ENCODE measurements at regions of chr15 and their contacts with region 1.

Region 1: DNA sequence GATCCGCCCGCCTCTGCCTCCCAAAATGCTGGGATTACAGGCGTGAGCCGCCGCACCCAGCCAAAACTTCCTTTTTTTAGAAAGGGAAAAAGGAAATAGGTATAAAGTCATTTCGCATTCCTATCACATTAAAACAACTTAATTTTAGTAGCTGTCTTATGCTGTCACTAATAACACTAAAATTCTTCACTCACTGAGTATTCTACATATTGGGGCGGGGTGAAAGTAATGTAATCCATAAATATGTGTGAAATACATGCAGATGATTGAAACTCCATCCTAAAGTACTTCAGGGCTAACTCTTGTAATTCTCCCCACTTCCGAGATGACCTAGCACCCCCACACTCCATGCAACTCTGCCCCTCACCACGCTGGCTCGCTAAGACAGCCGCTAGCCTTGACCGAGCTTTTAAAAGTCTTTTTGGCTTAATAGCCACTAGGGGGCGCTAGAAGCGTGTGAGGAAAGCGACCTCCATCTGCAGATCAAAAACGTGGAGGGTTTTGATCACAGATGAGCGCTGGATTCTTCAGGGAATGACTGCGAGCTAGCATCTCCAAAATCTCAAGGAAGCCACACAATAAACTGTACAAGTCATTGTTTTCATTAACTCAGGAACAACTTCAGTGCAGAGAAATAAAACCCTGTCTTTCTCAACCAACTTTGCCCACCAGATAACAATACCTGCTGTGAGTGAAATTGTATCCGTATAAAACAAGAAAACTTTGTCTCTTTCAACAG is 129.3 kb upstream of the IGF1R start:
- DNase-seq: peak; percentile 79
- H3K4me3 ChIP-seq: peak overlapping the region in 1 of 2 experiments; percentile 49; a peak in 2 of 4 replicates
- H3K27ac ChIP-seq: no peak overlapping the region
- H3K4me1 ChIP-seq: no peaks in the 10 kb centered on the region
- H3K27me3 ChIP-seq: no peaks in the 10 kb centered on the region
- CTCF ChIP-seq: peak; percentile 85
- EP300 ChIP-seq: no peak
- RAD21 ChIP-seq: peak; percentile 86

Region 2: GRCh38 chr15:98321896-98322295 is 197.1 kb before region 1 on chr15:
- CTCF ChIA-PET with region 1: no interaction called
- POLR2A ChIA-PET with region 1: no interaction called
- DNase-seq: no peak
- H3K4me3 ChIP-seq: no peak overlapping the region
- H3K27ac ChIP-seq: no peak overlapping the region
- H3K4me1 ChIP-seq: no peaks in the 10 kb centered on the region
- H3K27me3 ChIP-seq: peaks cover 14% of the 10 kb centered on the region; the same call in 1 of the 2 replicates
- CTCF ChIP-seq: no peak
- EP300 ChIP-seq: no peak
- RAD21 ChIP-seq: no peak

Region 3: DNA sequence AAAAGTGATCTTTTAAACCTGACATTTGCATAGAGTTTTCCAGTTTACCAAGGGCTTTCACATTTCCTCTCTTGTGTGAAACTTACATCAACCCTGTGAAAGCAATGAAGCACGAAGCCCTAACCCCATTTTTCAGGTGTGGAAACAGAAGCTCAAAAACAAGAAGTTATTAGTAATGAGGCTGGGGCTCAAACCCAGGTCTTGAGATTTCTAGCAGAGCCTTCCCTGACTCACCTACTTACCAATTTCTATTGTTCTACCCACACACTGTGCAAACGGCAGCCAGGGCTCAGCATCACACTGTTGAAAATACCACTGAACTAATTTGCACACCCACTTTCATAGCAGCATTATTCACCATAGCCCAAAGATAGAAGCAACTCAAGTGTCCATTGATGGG is 11.6 kb after region 1 on chr15:
- CTCF ChIA-PET with region 1: interaction called, 14 read pairs
- POLR2A ChIA-PET with region 1: no interaction called
- DNase-seq: no peak
- H3K4me3 ChIP-seq: no peak overlapping the region
- H3K27ac ChIP-seq: no peak overlapping the region
- H3K4me1 ChIP-seq: no peaks in the 10 kb centered on the region
- H3K27me3 ChIP-seq: peaks cover 19% of the 10 kb centered on the region; the same call in 1 of the 2 replicates
- CTCF ChIP-seq: no peak
- EP300 ChIP-seq: no peak
- RAD21 ChIP-seq: no peak

Region 4: DNA sequence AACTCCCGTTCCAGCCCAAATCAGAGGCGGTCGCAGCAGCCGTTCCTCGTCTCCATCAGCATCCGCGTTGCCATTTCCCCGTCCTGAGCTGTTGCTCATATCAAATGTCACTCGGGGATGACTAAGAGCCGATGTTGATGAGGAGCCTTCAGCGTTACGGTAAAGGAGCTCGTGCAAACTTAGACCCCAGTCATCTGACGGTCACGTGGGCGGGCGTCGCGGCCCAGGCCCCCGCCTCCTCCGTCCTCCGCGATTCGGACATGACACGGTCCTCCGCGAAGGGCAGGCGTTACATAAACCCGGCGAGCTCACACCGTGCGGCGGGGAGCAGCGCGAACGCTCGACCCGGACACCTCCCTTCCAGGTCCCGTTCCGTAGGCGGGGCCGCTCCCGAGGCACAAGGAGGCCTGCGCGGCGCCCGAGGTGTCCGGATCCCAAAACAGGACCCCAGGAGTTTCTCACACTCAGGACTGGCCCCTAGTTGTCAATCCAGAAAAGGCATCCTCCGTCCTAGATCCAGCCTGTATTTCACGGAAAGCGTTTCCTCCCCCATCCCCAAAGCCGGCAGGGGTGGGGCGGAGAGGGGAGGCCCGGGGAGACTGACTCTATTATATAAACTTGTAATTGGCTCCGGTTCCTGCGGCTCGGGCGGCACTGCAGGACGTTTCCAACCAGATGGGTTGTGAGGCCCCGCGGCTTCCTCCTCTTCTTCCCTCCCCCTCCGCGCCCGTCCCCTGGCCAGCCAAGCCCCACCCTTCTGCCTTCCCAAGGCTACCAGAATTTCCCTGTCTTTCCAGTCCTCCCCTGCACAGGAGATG is 29.4 kb after region 1 on chr15:
- CTCF ChIA-PET with region 1: interaction called, 16 read pairs
- POLR2A ChIA-PET with region 1: no interaction called
- DNase-seq: peak; percentile 64
- H3K4me3 ChIP-seq: peak overlapping the region; percentile 48 to 62
- H3K27ac ChIP-seq: no peak overlapping the region
- H3K4me1 ChIP-seq: peaks cover 0 to 11% of the 10 kb centered on the region in 2 experiments; a peak in 1 of 4 replicates
- H3K27me3 ChIP-seq: peaks cover 23% of the 10 kb centered on the region; the same call in 1 of the 2 replicates
- CTCF ChIP-seq: no peak; the same call in 1 of the 2 replicates
- EP300 ChIP-seq: no peak
- RAD21 ChIP-seq: no peak

Region 5: DNA sequence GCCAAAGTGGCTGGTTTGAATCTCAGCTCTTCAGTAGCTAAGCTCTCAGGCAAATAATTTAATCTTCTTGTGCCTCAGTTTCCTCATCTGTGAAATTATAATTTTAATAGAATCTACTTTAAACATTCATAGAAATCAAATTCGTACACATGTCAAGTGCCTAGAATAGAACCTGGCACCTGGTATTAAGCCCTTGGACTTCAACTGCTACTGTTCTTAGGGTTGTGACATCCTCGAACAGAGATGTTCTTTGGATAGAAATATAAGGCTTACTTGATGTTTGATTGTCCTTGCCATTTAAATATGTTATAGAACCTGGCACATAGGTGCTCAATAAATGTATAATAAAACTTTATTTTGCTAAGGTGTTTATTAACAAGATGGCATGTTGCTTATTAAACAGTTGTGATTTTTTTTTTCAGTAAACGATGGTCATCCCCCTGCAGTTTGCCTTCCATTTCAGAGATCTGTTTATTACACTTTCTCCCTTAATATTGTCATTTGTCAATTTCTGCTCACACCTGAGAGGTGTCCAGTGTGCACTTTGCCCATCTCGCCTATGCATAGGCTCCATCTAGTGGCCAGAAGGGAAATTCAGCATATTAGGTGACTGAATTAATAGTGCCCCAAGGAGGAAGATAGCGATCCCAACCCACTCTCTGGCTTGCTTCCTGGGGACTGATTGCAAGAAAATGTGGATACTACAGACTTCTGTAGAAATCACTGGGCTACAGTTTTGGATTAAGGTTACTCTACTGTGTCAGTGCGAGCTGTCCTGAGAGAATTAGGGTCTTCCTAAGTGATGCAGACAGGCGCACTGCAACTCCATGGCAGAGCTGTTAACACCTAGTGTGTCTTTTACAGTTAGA is 140.1 kb after region 1 on chr15:
- CTCF ChIA-PET with region 1: interaction called, 20 read pairs
- POLR2A ChIA-PET with region 1: no interaction called
- DNase-seq: peak; percentile 75
- H3K4me3 ChIP-seq: no peak overlapping the region
- H3K27ac ChIP-seq: no peak overlapping the region
- H3K4me1 ChIP-seq: peaks cover 0 to 30% of the 10 kb centered on the region in 2 experiments; a peak in 2 of 4 replicates
- H3K27me3 ChIP-seq: no peaks in the 10 kb centered on the region
- CTCF ChIP-seq: peak; percentile 94
- EP300 ChIP-seq: no peak
- RAD21 ChIP-seq: peak; percentile 75

Region 6: GRCh38 chr15:98827217-98827616 is 308.2 kb after region 1 on chr15:
- CTCF ChIA-PET with region 1: no interaction called
- POLR2A ChIA-PET with region 1: no interaction called
- DNase-seq: no peak
- H3K4me3 ChIP-seq: no peak overlapping the region
- H3K27ac ChIP-seq: no peak overlapping the region
- H3K4me1 ChIP-seq: peaks cover 0 to 9% of the 10 kb centered on the region in 2 experiments; a peak in 2 of 4 replicates
- H3K27me3 ChIP-seq: no peaks in the 10 kb centered on the region
- CTCF ChIP-seq: no peak
- EP300 ChIP-seq: no peak
- RAD21 ChIP-seq: no peak

Region 7: DNA sequence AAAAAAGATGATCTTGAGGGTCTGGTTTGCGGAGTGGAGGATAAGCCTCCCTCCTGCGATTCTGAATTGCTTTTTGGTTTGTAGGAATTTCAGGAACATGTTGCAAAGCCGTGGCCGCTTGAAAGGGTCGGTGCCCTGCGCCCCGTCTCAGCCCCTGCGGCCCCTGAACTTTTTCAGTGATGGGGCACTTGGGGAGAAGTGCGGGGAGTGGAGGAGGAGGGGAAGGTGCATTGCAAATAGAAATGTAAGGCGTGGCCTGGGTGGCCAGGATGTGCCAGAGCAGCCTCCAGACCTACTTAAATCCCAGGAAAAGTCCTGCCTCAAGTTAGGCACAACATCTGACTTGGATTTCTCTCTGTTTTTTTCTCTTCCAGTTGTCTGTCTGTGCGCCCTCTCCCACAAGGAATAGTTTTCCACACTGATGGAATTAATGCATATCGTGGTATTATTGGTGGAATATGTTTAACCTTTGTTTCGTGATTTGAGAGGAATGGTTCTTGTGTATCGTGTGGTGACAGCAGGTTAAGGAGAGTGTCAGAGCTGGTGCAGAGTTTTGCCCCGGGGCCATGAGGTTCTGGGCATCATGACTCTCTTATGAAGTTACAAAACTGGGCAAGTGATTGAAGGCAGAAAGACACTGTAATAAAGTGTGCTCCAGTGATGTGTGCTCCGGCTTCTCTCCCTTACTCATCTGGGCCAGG is 334.8 kb after region 1 on chr15:
- CTCF ChIA-PET with region 1: interaction called, 14 read pairs
- POLR2A ChIA-PET with region 1: interaction called, 3 read pairs
- DNase-seq: no peak
- H3K4me3 ChIP-seq: peak overlapping the region; percentile 31 to 76; a peak in 3 of 4 replicates
- H3K27ac ChIP-seq: peak overlapping the region; percentile 68 to 86
- H3K4me1 ChIP-seq: peaks cover 46 to 51% of the 10 kb centered on the region in 2 experiments
- H3K27me3 ChIP-seq: no peaks in the 10 kb centered on the region
- CTCF ChIP-seq: no peak
- EP300 ChIP-seq: no peak; a peak in 1 of 4 replicates
- RAD21 ChIP-seq: no peak

Region 8: GRCh38 chr15:98904544-98904943 is 385.6 kb after region 1 on chr15:
- CTCF ChIA-PET with region 1: interaction called, 53 read pairs
- POLR2A ChIA-PET with region 1: no interaction called
- DNase-seq: peak; percentile 84
- H3K4me3 ChIP-seq: no peak overlapping the region
- H3K27ac ChIP-seq: peak overlapping the region; percentile 48 to 73; a peak in 3 of 4 replicates
- H3K4me1 ChIP-seq: peaks cover 24 to 28% of the 10 kb centered on the region in 2 experiments; a peak in 3 of 4 replicates
- H3K27me3 ChIP-seq: no peaks in the 10 kb centered on the region
- CTCF ChIP-seq: peak; percentile 75
- EP300 ChIP-seq: no peak; a peak in 1 of 4 replicates
- RAD21 ChIP-seq: peak; percentile 93

Region 9: DNA sequence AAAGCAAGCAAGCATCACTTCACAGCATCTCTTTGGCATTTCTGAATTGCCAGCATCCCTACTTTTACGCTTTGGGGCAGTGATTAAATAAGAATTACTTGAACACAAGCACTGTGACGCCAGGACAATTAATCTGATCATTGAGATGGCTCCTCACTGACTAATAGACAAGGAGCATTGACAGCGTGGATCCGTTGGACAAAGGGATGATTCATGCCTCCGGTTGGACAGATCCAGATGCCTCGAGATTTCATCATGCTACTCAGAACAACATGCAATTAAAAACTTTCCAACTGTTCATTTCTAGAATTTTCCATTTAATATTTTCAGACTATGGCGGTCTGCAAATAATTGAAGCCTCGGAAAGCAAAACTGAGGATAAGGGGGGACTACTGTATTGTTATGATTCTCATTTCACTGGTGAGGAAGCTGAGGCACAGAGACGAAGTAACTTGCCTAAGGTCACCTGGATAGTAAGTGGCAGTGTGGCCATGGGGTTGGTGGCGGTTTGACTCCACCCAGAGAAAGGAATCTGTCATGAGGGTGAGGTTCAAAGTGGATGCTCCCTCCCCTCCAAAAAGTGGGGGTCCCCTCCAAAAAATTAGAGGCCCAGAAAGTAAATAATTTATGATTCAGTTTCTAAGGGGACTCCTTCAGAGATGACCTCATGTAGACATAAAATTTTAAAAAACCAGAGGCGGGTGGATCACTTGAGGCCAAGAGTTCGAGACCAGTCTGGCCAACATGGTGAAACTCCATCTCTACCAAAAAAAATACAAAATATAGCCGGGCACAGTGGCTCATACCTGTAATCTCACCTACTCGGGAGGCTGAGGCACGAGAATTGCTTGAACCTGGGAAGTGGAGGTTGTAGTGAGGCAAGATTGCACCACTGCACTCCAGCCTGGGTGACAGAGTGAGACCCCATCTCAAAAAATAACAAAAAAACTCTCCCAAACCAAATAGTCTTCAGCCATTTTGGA is 500.9 kb after region 1 on chr15:
- CTCF ChIA-PET with region 1: no interaction called
- POLR2A ChIA-PET with region 1: no interaction called
- DNase-seq: no peak
- H3K4me3 ChIP-seq: no peak overlapping the region
- H3K27ac ChIP-seq: 0 out of 4 replicates have a peak overlapping the region, but pooled peaks of 1 of the 2 experiments have one; percentile 13
- H3K4me1 ChIP-seq: peaks cover 11 to 12% of the 10 kb centered on the region in 2 experiments; a peak in 2 of 4 replicates
- H3K27me3 ChIP-seq: no peaks in the 10 kb centered on the region
- CTCF ChIP-seq: no peak
- EP300 ChIP-seq: no peak
- RAD21 ChIP-seq: no peak

Region 10: DNA sequence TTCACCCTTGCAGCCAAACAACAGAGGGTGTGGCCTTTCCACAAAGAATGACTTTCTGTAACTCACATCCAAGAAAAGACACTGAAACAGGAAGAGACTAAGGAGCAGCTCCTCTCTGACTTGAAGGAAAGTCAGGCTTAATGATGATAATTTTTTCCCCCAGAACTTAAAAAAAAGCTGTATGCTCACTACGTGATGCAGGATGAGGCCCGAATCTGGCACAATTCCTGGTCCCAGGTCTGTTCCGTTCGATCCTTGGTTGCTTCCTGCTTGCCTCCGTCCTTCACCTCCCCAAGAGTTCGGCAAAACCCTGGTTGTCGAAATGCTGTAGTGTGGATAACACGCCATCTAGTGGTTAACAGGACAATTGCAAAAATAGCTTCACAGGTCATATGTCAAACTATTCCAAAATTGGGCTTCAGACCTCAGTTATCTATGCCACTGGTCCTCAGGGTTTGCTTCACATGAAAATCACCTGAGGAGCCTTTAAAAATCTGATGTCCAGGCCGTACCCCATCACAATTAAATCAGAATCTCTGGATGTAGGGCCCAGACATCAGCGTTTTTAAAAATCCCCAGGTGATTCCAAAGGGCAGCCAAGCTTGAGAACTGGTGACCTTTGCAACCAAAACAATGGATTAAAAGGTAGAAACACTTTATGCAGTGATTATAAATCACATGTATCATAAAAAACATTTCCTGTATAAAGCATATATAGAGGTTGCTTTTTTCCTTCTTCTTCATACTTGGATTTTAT is 557.7 kb after region 1 on chr15:
- CTCF ChIA-PET with region 1: interaction called, 41 read pairs
- POLR2A ChIA-PET with region 1: no interaction called
- DNase-seq: peak; percentile 74
- H3K4me3 ChIP-seq: peak overlapping the region; percentile 36 to 60
- H3K27ac ChIP-seq: peak overlapping the region in 1 of 2 experiments; percentile 45; a peak in 2 of 4 replicates
- H3K4me1 ChIP-seq: no peaks in the 10 kb centered on the region; a peak in 1 of 4 replicates
- H3K27me3 ChIP-seq: no peaks in the 10 kb centered on the region
- CTCF ChIP-seq: peak; percentile 91
- EP300 ChIP-seq: no peak
- RAD21 ChIP-seq: peak; percentile 94

Region 11: GRCh38 chr15:99092554-99093172 is 573.7 kb after region 1 on chr15:
- CTCF ChIA-PET with region 1: no interaction called
- POLR2A ChIA-PET with region 1: no interaction called
- DNase-seq: no peak
- H3K4me3 ChIP-seq: no peak overlapping the region
- H3K27ac ChIP-seq: no peak overlapping the region
- H3K4me1 ChIP-seq: no peaks in the 10 kb centered on the region
- H3K27me3 ChIP-seq: no peaks in the 10 kb centered on the region
- CTCF ChIP-seq: no peak
- EP300 ChIP-seq: no peak
- RAD21 ChIP-seq: no peak